ENCODE measurements at regions of chr11 and their contacts with region 1.

Region 1: DNA sequence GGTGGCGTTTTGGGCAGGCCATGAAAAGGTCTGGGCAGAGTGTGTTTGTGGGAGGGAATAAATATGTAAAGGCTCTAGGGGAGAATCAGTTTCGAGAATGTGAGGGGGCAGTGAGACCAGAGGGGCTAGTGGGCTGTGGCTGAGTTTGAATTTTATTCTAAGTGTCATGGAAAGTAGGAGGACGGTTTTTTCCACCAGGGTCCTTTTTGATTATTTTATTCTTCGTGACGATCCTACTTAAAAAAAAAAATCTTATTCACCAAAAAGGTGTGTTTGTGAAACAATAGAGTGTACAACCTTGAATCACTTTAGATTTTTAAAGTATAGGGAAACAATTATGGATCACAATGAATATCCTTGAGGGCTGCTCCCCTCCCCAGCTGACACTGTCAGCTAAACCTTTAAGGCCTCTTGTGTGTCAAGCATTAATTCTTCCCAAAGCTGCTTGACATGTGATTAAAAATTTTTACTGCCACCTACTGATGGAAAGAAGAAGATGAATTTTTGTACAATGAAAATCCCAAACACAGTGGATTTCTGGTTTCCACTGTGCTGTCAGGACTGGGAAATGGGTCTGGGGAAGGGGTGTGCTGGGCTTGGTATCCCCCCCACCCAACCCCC is 107.5 kb upstream of the OR4B1 start:
- DNase-seq: no peak
- H3K4me3 Mint-ChIP-seq: peak overlapping the region; percentile 52
- H3K27ac Mint-ChIP-seq: no peak overlapping the region
- H3K4me1 Mint-ChIP-seq: peaks cover 71% of the 10 kb centered on the region
- H3K27me3 Mint-ChIP-seq: no peaks in the 10 kb centered on the region
- CTCF ChIP-seq: peak; percentile 30

Region 2: DNA sequence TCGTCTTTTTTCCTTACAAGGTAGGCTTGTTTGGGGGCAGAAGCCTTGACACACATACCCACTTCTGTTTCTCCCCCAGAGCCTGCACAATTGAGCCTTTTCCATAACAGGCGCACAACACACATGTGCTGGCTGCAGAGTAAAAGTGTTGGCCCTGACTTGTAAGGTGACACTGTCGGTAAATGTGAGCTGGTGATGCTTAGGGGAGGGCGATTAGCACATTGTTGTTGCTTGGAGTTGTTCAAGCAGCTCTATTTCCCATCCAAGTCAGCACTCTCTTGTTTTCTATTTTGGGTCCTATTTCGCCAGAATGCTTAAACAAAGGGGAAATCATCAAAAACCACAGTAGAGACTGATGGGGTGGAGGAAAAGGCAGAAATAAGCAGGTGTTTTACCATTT is 180.7 kb before region 1 on chr11:
- CTCF ChIA-PET with region 1: interaction called, 13 read pairs
- intact Hi-C with region 1: no loop called
- DNase-seq: no peak
- H3K4me3 Mint-ChIP-seq: no peak overlapping the region
- H3K27ac Mint-ChIP-seq: no peak overlapping the region
- H3K4me1 Mint-ChIP-seq: peaks cover 20% of the 10 kb centered on the region
- H3K27me3 Mint-ChIP-seq: no peaks in the 10 kb centered on the region
- CTCF ChIP-seq: no peak

Region 3: DNA sequence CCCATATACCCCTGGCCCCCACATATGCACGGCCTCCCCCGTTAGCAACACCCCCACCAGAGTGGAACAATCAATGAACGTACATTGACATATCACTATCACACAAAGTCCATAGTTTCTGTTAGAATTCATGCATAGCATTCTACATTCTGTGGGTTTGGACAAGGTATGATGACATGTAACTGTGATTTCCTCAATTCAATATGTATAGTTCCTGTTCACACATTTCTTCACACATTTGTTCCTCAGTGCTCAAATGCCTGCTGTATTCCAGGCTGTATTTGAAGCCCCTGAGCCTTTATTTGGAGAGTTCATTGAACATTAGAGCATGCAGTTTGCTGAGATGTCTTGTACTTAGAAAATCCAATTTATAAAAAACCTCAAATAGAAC is 58.8 kb before region 1 on chr11:
- CTCF ChIA-PET with region 1: interaction called, 4 read pairs
- intact Hi-C with region 1: loop called (anchors 2 kb)
- DNase-seq: no peak
- H3K4me3 Mint-ChIP-seq: peak overlapping the region; percentile 34
- H3K27ac Mint-ChIP-seq: peak overlapping the region; percentile 86
- H3K4me1 Mint-ChIP-seq: peaks cover 58% of the 10 kb centered on the region
- H3K27me3 Mint-ChIP-seq: no peaks in the 10 kb centered on the region
- CTCF ChIP-seq: no peak

Measured in Calu3 (cell line).